H1 (cell line): ENCODE measurements at regions of chr22 and their contacts with region 1.

Region 1: GRCh38 chr22:50293441-50294318 is 13.8 kb downstream of the PLXNB2 start:
- DNase-seq: peak in 1 of 2 experiments; percentile 90
- H3K4me3 ChIP-seq: peak overlapping the region; percentile 19 to 52 (median 24); a peak in 5 of 8 replicates
- H3K27ac ChIP-seq: peak overlapping the region; percentile 77; the same call in 1 of the 2 replicates
- H3K4me1 ChIP-seq: peaks cover 0 to 32% (median 21%) of the 10 kb centered on the region in 4 experiments; a peak in 6 of 7 replicates
- H3K27me3 ChIP-seq: no peaks in the 10 kb centered on the region
- CTCF ChIP-seq: no peak
- EP300 ChIP-seq: peak in 1 of 2 experiments; percentile 65; a peak in 1 of 3 replicates
- POLR2A ChIP-seq: no peak
- RAD21 ChIP-seq: no peak

Region 2: GRCh38 chr22:50281913-50282312 is 11.8 kb before region 1 on chr22:
- CTCF ChIA-PET with region 1: interaction called, 27 read pairs
- POLR2A ChIA-PET with region 1: interaction called, 6 read pairs
- DNase-seq: no peak
- H3K4me3 ChIP-seq: no peak overlapping the region
- H3K27ac ChIP-seq: 0 out of 2 replicates have a peak overlapping the region, but pooled peaks have one; percentile 24
- H3K4me1 ChIP-seq: peaks cover 0 to 2% (median 0%) of the 10 kb centered on the region in 4 experiments; a peak in 2 of 7 replicates
- H3K27me3 ChIP-seq: no peaks in the 10 kb centered on the region
- CTCF ChIP-seq: no peak
- EP300 ChIP-seq: no peak
- POLR2A ChIP-seq: no peak
- RAD21 ChIP-seq: no peak

Region 3: DNA sequence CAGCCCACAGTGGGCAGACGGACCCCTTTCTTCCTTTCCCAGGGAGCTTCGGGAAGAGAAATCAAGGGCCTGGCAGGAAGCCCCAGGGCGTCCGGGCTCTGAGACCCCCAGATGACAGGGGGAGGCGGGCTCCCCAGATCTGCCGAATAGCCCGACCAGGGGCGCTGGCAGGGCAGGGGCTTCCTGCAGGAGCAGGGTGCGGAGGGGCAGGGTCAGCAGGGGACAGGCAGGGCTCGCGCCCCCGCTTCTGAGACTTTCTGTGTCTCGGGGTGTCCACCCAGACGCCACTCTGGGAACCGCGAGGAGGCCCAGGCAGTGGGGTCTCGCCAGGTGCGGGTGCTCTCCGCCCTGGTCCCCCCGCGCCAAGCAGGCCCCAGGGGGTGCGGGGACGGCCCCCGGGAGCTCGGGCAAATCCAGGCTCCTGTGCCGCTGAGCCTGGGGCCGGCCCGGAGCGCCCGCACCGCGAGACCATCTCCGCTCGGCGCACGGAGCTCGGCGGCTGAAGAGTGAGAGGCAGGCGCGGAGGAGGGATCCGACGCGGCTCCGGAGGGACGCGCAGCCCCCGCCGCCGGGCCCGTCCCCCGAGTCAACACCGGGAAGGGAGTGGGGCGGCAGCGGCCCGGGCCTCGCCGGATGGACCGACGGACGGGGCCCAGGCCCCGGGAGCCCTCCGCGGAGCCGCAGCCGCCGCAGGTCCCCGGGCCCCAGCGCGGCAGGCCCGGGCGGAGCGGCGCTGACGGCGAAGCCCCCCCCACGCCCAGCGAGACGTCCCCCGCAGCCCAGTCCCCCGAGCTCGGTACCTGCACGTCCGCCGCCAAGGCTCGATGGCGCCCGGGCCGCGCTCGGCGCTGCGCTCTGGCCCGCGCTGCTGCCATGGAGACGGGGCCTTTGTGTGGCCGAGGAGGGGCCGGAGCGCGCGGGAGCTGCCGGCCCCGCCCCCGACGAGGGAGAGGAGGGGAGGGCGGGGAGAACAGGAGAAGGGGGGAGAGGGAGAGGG is 13.4 kb after region 1 on chr22 and contains the start of gene PLXNB2:
- CTCF ChIA-PET with region 1: interaction called, 15 read pairs
- POLR2A ChIA-PET with region 1: interaction called, 16 read pairs
- DNase-seq: peak in 1 of 2 experiments; percentile 78
- H3K4me3 ChIP-seq: peak within 1 kb of the TSS; percentile 64 to 70 (median 66)
- H3K27ac ChIP-seq: no peak within 1 kb of the TSS; the same call in 1 of the 2 replicates
- H3K4me1 ChIP-seq: peaks cover 3 to 36% (median 20%) of the 10 kb centered on the region in 4 experiments
- H3K27me3 ChIP-seq: no peaks in the 10 kb centered on the region; a peak in 2 of 7 replicates
- CTCF ChIP-seq: no peak
- EP300 ChIP-seq: no peak
- POLR2A ChIP-seq: 0 out of 3 replicates have a peak, but pooled peaks of 1 of the 2 experiments have one; percentile 20
- RAD21 ChIP-seq: no peak
- total RNA-seq, gene PLXNB2: 92.8 and 106 TPM in 2 replicates